Mammary epithelial cell (primary cell): ENCODE measurements at regions of chr2 and their contacts with region 1.

Region 1: GRCh38 chr2:227717687-227718567 is at the start of gene SLC19A3:
- DNase-seq: peak; percentile 35
- H3K4me3 ChIP-seq: peak within 1 kb of the TSS; percentile 29 to 41 (median 34)
- H3K27ac ChIP-seq: no peak within 1 kb of the TSS
- H3K4me1 ChIP-seq: peaks cover 9% of the 10 kb centered on the region
- H3K27me3 ChIP-seq: no peaks in the 10 kb centered on the region
- CTCF ChIP-seq: no peak
- total RNA-seq, gene SLC19A3: 0.35 to 0.83 TPM

Region 2: DNA sequence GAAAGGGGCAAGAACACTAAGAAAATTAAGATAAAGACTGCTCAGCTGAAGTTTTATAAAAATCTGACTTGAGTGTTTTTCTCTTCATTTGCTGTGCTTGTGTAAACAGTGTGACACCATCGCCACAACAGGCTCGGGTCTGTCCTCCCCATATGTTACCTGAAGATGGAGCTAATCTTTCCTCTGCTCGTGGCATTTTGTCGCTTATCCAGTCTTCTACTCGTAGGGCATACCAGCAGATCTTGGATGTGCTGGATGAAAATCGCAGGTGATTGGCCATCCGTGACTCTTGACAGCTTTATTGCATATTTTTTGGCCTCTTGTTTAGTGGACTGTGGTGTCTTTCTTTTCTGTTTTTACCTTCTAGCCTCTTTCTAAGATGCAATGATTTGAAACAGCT is 370.8 kb before region 1 on chr2:
- CTCF ChIA-PET with region 1: no interaction called
- dilution Hi-C with region 1: no loop called
- in situ Hi-C with region 1: no loop called
- intact Hi-C with region 1: no loop called
- DNase-seq: no peak
- H3K4me3 ChIP-seq: no peak overlapping the region
- H3K27ac ChIP-seq: no peak overlapping the region
- H3K4me1 ChIP-seq: no peaks in the 10 kb centered on the region
- H3K27me3 ChIP-seq: no peaks in the 10 kb centered on the region
- CTCF ChIP-seq: no peak

Region 3: GRCh38 chr2:227627769-227628168 is 90.2 kb before region 1 on chr2:
- CTCF ChIA-PET with region 1: no interaction called
- dilution Hi-C with region 1: loop called (anchors 5 kb)
- in situ Hi-C with region 1: no loop called
- intact Hi-C with region 1: no loop called
- DNase-seq: no peak
- H3K4me3 ChIP-seq: no peak overlapping the region
- H3K27ac ChIP-seq: no peak overlapping the region
- H3K4me1 ChIP-seq: peaks cover 6% of the 10 kb centered on the region
- H3K27me3 ChIP-seq: peaks cover 2% of the 10 kb centered on the region
- CTCF ChIP-seq: no peak